Activated naive CD4-positive, alpha-beta T cell treated with anti-CD3 and anti-CD28 coated beads for 36 hours (primary cell): ENCODE measurements at regions of chr17 and their contacts with region 1.

Region 1: GRCh38 chr17:47889734-47890529 is 6.1 kb upstream of the SP2 start:
- DNase-seq: peak; percentile 97
- H3K4me3 Mint-ChIP-seq: no peak overlapping the region
- H3K27ac Mint-ChIP-seq: no peak overlapping the region
- H3K4me1 Mint-ChIP-seq: peaks cover 24% of the 10 kb centered on the region
- H3K27me3 Mint-ChIP-seq: no peaks in the 10 kb centered on the region

Region 2: GRCh38 chr17:47850692-47851573 is 39.0 kb before region 1 on chr17 and contains the start of gene SP6:
- CTCF ChIA-PET with region 1: interaction called, 460 read pairs
- intact Hi-C with region 1: loop called (anchors 1 kb)
- DNase-seq: peak; percentile 73
- H3K4me3 Mint-ChIP-seq: peak within 1 kb of the TSS; percentile 17
- H3K27ac Mint-ChIP-seq: no peak within 1 kb of the TSS
- H3K4me1 Mint-ChIP-seq: peaks cover 23% of the 10 kb centered on the region
- H3K27me3 Mint-ChIP-seq: peaks cover 81% of the 10 kb centered on the region
- total RNA-seq, gene SP6: 0.10 to 0.19 TPM

Region 3: DNA sequence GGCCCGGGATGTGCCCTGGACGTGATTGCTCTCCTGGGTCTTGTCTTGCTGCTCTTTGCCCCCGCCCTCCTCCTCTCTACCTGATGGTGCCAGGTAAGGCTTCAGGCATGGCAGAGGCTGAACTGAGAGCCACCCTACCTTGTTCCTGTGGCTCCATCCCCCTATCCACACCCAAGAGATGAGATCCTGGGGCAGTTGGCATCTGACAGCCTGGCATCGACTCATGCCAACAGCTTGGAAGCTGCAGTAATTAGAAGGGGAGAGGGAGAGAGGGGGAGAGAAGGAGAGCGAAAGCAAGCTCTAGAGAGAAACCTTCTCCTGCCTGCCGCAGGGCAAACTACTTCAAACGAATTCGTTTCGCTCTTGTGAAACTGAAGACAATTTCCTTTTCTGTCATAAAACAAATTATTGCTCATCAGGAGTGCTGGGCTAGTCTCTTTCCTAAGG is 25.1 kb before region 1 on chr17:
- CTCF ChIA-PET with region 1: interaction called, 11 read pairs
- intact Hi-C with region 1: no loop called
- DNase-seq: peak; percentile 32
- H3K4me3 Mint-ChIP-seq: no peak overlapping the region
- H3K27ac Mint-ChIP-seq: peak overlapping the region; percentile 3
- H3K4me1 Mint-ChIP-seq: peaks cover 21% of the 10 kb centered on the region
- H3K27me3 Mint-ChIP-seq: no peaks in the 10 kb centered on the region

Region 4: GRCh38 chr17:47905221-47905781 is 15.4 kb after region 1 on chr17:
- CTCF ChIA-PET with region 1: interaction called, 12 read pairs
- intact Hi-C with region 1: no loop called
- DNase-seq: no peak
- H3K4me3 Mint-ChIP-seq: no peak overlapping the region
- H3K27ac Mint-ChIP-seq: no peak overlapping the region
- H3K4me1 Mint-ChIP-seq: peaks cover 23% of the 10 kb centered on the region
- H3K27me3 Mint-ChIP-seq: no peaks in the 10 kb centered on the region

Region 5: GRCh38 chr17:47924785-47925676 is 35.1 kb after region 1 on chr17:
- CTCF ChIA-PET with region 1: no interaction called
- intact Hi-C with region 1: no loop called
- DNase-seq: no peak
- H3K4me3 Mint-ChIP-seq: no peak overlapping the region
- H3K27ac Mint-ChIP-seq: no peak overlapping the region
- H3K4me1 Mint-ChIP-seq: no peaks in the 10 kb centered on the region
- H3K27me3 Mint-ChIP-seq: no peaks in the 10 kb centered on the region

Region 6: GRCh38 chr17:47949136-47949759 is 59.3 kb after region 1 on chr17:
- CTCF ChIA-PET with region 1: interaction called, 10 read pairs
- intact Hi-C with region 1: no loop called
- DNase-seq: peak; percentile 88
- H3K4me3 Mint-ChIP-seq: peak overlapping the region; percentile 49
- H3K27ac Mint-ChIP-seq: peak overlapping the region; percentile 67
- H3K4me1 Mint-ChIP-seq: peaks cover 41% of the 10 kb centered on the region
- H3K27me3 Mint-ChIP-seq: no peaks in the 10 kb centered on the region

Region 7: GRCh38 chr17:47987240-47987835 is 97.4 kb after region 1 on chr17:
- CTCF ChIA-PET with region 1: no interaction called
- intact Hi-C with region 1: no loop called
- DNase-seq: no peak
- H3K4me3 Mint-ChIP-seq: no peak overlapping the region
- H3K27ac Mint-ChIP-seq: no peak overlapping the region
- H3K4me1 Mint-ChIP-seq: no peaks in the 10 kb centered on the region
- H3K27me3 Mint-ChIP-seq: no peaks in the 10 kb centered on the region

Region 8: GRCh38 chr17:48382989-48383388 is 493.1 kb after region 1 on chr17:
- CTCF ChIA-PET with region 1: no interaction called
- intact Hi-C with region 1: no loop called
- DNase-seq: no peak
- H3K4me3 Mint-ChIP-seq: no peak overlapping the region
- H3K27ac Mint-ChIP-seq: no peak overlapping the region
- H3K4me1 Mint-ChIP-seq: peaks cover 26% of the 10 kb centered on the region
- H3K27me3 Mint-ChIP-seq: no peaks in the 10 kb centered on the region